Activated T-helper 2 cell treated with anti-CD3 and anti-CD28 coated beads, Interferon-gamma antibody, Interleukin-2, Interleukin-4, amounts not matched to agents 10 μg/mL and 5 μg/mL and 100 μg/mL, durations not matched to agents 14 hours and 24 hours and 36 hours (primary cell): ENCODE measurements at regions of chr17 and their contacts with region 1.

Region 1: DNA sequence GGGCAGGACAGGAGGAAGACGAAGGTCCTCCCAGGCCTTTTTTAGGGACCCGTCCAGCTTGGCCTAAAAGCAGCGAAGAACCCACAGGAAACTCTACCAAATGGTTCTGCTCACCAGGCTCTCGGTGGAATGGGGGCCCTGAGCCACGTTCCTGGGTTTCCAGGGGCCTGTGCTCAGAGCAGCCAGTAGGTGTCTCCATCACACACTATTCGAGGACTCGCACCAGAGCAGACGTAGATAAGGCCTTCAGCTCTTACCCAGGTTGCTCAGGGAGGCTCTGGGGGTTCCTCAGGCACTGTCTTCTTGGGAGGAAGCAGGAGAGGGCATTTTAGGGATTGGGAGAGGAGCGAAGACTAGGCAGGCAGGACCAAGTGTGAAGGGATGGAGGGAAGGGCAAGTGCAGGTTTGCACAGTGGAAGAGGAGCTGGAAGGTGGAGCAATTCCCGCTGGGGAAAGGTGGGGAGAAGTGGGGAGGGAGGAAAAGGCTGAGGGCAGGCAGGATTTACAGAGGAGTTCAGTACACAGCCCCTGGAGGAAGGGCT is 157.1 kb downstream of the RGS9 start:
- DNase-seq: peak; percentile 46
- H3K4me3 Mint-ChIP-seq: no peak overlapping the region
- H3K27ac Mint-ChIP-seq: no peak overlapping the region
- H3K4me1 Mint-ChIP-seq: peaks cover 5% of the 10 kb centered on the region
- H3K27me3 Mint-ChIP-seq: peaks cover 14% of the 10 kb centered on the region

Region 2: GRCh38 chr17:65988081-65988850 is 694.0 kb after region 1 on chr17:
- intact Hi-C with region 1: loop called (anchors 10 kb)
- DNase-seq: no peak
- H3K4me3 Mint-ChIP-seq: no peak overlapping the region
- H3K27ac Mint-ChIP-seq: no peak overlapping the region
- H3K4me1 Mint-ChIP-seq: no peaks in the 10 kb centered on the region
- H3K27me3 Mint-ChIP-seq: peaks cover 4% of the 10 kb centered on the region

Region 3: DNA sequence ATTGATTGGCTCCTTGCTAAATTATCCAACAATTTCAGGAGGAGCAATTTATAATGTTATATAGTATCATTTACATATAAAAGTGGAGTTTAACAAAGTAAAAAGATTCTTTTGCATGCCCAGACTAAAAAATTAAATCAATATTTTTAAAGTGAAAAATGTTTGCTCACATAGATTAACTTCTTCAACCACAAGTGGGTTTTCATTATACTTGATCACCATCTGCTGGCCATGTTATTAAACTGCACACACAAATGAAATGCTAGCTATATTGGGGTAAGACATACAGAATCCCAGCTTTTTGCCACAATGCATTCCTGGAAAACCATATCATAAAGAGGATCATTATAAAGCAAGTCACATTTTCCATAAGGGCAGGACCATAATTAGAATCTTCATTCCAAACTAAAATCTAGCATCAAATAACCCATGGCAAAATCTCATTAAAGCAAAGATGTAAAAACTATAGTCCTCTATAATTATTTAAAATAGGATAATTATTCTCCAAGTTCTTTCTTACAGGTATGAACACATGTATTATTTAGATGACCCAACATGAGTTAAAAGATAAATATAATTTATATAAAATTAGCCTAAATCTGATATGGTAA is 871.4 kb after region 1 on chr17:
- intact Hi-C with region 1: loop called (anchors 1 kb)
- DNase-seq: no peak
- H3K4me3 Mint-ChIP-seq: no peak overlapping the region
- H3K27ac Mint-ChIP-seq: no peak overlapping the region
- H3K4me1 Mint-ChIP-seq: peaks cover 2% of the 10 kb centered on the region
- H3K27me3 Mint-ChIP-seq: peaks cover 9% of the 10 kb centered on the region